ENCODE measurements at regions of chr1 and their contacts with region 1.

Region 1: GRCh38 chr1:190633488-190633887 is 155.8 kb upstream of the BRINP3 start:
- DNase-seq: peak; percentile 25
- ATAC-seq: peak; percentile 49; the same call in 1 of the 2 replicates
- H3K4me3 ChIP-seq: no peak overlapping the region
- H3K27ac ChIP-seq: no peak overlapping the region
- H3K4me1 ChIP-seq: no peaks in the 10 kb centered on the region
- H3K27me3 ChIP-seq: peaks cover 3% of the 10 kb centered on the region; the same call in 1 of the 2 replicates
- CTCF ChIP-seq: peak; percentile 47; the same call in 1 of the 2 replicates

Region 2: DNA sequence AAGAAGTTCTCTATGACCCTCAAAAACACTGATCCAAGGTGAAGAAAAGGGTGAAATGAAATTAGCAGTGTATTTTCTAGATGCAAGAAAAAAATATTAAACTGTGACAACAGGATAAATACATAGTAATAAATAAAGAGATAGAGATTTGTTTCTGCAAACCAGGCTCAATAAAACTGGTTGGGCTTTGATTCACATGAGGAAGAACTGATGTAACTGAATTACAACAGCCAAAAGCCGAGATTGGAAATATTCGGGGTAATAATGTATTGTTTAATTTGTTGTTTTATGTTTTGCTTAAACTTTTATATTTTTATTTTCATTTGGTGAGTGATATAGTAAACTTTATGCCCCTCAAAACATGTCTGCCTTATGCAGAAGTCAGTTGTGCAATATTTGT is 440.9 kb before region 1 on chr1:
- CTCF ChIA-PET with region 1: no interaction called
- POLR2A ChIA-PET with region 1: no interaction called
- intact Hi-C with region 1: no loop called
- DNase-seq: no peak
- ATAC-seq: no peak
- H3K4me3 ChIP-seq: no peak overlapping the region
- H3K27ac ChIP-seq: no peak overlapping the region
- H3K4me1 ChIP-seq: no peaks in the 10 kb centered on the region
- H3K27me3 ChIP-seq: peaks cover 25% of the 10 kb centered on the region; the same call in 1 of the 2 replicates
- CTCF ChIP-seq: no peak

Region 3: DNA sequence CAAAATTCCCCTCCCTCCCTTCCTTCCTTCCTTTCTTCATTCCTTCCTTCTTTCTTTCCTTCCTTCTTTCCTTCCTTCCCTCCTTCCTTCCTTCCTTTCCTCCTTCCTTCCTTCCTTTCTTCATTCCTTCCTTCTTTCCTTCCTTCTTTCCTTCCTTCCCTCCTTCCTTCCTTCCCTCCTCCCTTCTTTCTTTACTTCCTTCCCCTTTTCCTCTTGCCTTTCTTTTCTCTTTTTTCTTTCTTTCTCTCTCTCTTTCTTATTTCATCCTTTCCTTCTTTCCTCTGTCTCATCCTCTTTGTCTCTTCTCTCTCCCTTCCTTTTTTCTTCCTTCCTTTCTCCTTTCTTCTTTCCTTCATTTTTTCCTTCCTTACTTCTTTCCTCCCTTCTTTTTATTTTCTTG is 16.1 kb after region 1 on chr1:
- CTCF ChIA-PET with region 1: no interaction called
- POLR2A ChIA-PET with region 1: no interaction called
- intact Hi-C with region 1: no loop called
- DNase-seq: no peak
- ATAC-seq: no peak
- H3K4me3 ChIP-seq: no peak overlapping the region
- H3K27ac ChIP-seq: no peak overlapping the region
- H3K4me1 ChIP-seq: no peaks in the 10 kb centered on the region
- H3K27me3 ChIP-seq: peaks cover 10% of the 10 kb centered on the region
- CTCF ChIP-seq: no peak

Region 4: DNA sequence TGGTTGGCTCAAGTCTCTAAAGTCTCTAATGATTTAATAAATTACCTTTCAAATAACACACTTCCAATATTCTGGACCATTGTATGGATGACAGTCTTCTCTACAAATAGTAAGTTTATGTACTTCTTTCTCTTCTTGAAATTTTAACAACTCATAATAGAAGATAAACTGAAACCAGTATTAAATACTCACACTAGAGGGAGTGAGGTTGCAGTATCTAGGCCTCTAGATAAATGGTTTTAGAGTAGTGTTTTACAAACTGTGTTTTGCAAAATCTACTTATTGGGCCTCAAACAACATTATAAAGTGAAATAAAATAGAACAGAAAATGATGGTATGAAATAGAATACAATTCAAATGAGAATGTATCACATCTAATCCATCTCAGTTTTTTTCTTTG is 324.1 kb after region 1 on chr1:
- CTCF ChIA-PET with region 1: no interaction called
- POLR2A ChIA-PET with region 1: no interaction called
- intact Hi-C with region 1: loop called (anchors 10 kb)
- DNase-seq: peak; percentile 30
- ATAC-seq: peak; percentile 70
- H3K4me3 ChIP-seq: no peak overlapping the region
- H3K27ac ChIP-seq: no peak overlapping the region
- H3K4me1 ChIP-seq: no peaks in the 10 kb centered on the region
- H3K27me3 ChIP-seq: no peaks in the 10 kb centered on the region
- CTCF ChIP-seq: peak; percentile 51